Right ventricle myocardium inferior (tissue), 1 donor: ENCODE measurements at regions of chr12 and their contacts with region 1.

Region 1: GRCh38 chr12:5059358-5059757 is 15.7 kb downstream of the KCNA5 start:
- DNase-seq: no peak
- ATAC-seq: peak; percentile 78

Region 2: GRCh38 chr12:4807116-4807783 is 252.1 kb before region 1 on chr12:
- intact Hi-C with region 1: no loop called
- DNase-seq: no peak
- ATAC-seq: no peak

Region 3: GRCh38 chr12:5078423-5078822 is 19.1 kb after region 1 on chr12:
- intact Hi-C with region 1: loop called (anchors 2 kb)
- DNase-seq: no peak
- ATAC-seq: peak; percentile 94